Left cardiac atrium (tissue), 4 donors: ENCODE measurements at regions of chrX and their contacts with region 1.

Region 1: DNA sequence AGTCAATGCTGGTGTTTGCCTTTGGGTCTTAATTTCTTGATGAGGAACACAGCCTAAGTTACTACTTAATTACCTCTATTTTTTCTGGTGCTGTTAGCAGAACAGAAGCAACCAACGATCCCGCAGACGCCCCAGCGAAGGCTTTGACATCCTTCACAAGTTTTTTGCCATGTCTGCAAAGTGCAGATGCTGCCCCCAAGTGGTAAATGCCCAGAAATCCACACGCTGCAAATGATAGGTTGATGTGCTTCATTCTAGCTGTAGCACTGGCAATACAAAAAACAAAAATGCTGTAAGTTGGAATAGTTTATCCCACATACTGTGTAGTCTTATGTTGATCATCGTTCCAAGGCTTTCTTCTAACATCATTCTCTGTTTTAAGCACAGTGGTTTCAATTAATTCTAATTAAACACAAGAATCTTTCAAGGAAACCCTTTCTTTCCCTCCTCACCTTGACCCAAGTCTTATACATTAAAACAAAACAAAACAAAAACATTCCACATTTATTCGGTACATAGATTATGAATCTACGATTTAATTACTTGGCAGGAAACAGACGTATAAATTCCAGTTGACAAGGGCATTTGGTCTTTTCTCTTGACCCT is 1.2 kb downstream of the PNPLA4 start:
- DNase-seq: peak; percentile 47
- ATAC-seq: peak; percentile 17 to 52

Region 2: GRCh38 chrX:6021316-6022091 is 1904.5 kb before region 1 on chrX:
- intact Hi-C with region 1: loop called in 1 of 2 experiments (anchors 10 kb)
- DNase-seq: no peak
- ATAC-seq: no peak

Region 3: GRCh38 chrX:7139202-7140081 is 786.5 kb before region 1 on chrX:
- intact Hi-C with region 1: loop called in 1 of 2 experiments (anchors 5 kb)
- DNase-seq: no peak
- ATAC-seq: peak in 1 of 2 donors; percentile 70

Region 4: GRCh38 chrX:7776012-7776411 is 150.0 kb before region 1 on chrX:
- intact Hi-C with region 1: no loop called
- DNase-seq: no peak
- ATAC-seq: no peak

Region 5: GRCh38 chrX:8049827-8050226 is 123.9 kb after region 1 on chrX:
- intact Hi-C with region 1: no loop called
- DNase-seq: peak; percentile 37
- ATAC-seq: peak; percentile 39 to 70